H1 (cell line): ENCODE measurements at regions of chr13 and their contacts with region 1.

Region 1: DNA sequence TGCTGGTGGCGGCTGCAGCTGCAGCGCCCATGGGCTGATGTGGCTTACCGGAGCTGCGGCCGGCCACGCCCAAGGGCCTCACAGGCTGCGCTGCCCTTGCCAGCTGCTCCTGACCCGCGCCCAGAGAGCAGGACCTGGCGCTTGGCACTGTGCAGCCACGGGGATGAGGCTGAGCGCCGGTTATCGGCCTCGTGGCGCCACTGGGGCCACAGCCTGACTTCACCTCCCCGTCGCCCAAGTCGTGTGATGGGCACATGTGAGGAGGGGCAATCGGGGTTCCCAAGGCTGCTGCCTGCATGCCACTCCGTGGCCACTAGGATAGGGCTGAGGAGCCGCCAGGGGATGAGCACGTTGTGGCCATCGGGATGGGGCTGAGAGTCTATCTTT is 77.2 kb upstream of the PABPC3 start:
- DNase-seq: no peak
- H3K4me3 ChIP-seq: peak overlapping the region; percentile 38 to 66 (median 46)
- H3K27ac ChIP-seq: no peak overlapping the region
- H3K4me1 ChIP-seq: no peaks in the 10 kb centered on the region; a peak in 1 of 7 replicates
- H3K27me3 ChIP-seq: peaks cover 7 to 27% (median 20%) of the 10 kb centered on the region in 4 experiments
- CTCF ChIP-seq: peak; percentile 34 to 37 (median 35); a peak in 3 of 4 replicates
- EP300 ChIP-seq: no peak
- POLR2A ChIP-seq: no peak
- RAD21 ChIP-seq: no peak

Region 2: DNA sequence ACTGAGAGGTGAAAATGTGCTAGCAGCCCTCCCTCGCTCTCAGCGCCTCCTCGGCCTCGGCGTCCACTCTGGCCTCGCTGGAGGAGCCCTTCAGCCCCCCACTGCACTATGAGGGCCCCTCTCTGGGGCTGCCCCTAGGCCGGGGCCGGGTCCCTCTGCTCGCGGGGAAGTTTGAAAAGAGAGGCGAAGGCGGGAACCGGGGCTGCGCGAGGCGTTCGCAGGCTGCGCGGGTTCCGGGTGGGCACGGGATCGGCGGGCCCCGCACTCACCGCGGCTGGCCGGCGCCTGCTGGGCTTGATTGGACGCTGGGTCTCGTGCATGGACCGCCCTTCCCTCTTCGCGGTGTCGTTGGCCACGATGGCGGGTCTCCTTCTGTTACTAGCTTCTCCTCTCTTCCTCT is 680.0 kb before region 1 on chr13:
- CTCF ChIA-PET with region 1: no interaction called
- POLR2A ChIA-PET with region 1: no interaction called
- DNase-seq: no peak
- H3K4me3 ChIP-seq: no peak overlapping the region
- H3K27ac ChIP-seq: no peak overlapping the region
- H3K4me1 ChIP-seq: no peaks in the 10 kb centered on the region
- H3K27me3 ChIP-seq: no peaks in the 10 kb centered on the region
- CTCF ChIP-seq: no peak
- EP300 ChIP-seq: no peak
- POLR2A ChIP-seq: no peak
- RAD21 ChIP-seq: no peak

Region 3: DNA sequence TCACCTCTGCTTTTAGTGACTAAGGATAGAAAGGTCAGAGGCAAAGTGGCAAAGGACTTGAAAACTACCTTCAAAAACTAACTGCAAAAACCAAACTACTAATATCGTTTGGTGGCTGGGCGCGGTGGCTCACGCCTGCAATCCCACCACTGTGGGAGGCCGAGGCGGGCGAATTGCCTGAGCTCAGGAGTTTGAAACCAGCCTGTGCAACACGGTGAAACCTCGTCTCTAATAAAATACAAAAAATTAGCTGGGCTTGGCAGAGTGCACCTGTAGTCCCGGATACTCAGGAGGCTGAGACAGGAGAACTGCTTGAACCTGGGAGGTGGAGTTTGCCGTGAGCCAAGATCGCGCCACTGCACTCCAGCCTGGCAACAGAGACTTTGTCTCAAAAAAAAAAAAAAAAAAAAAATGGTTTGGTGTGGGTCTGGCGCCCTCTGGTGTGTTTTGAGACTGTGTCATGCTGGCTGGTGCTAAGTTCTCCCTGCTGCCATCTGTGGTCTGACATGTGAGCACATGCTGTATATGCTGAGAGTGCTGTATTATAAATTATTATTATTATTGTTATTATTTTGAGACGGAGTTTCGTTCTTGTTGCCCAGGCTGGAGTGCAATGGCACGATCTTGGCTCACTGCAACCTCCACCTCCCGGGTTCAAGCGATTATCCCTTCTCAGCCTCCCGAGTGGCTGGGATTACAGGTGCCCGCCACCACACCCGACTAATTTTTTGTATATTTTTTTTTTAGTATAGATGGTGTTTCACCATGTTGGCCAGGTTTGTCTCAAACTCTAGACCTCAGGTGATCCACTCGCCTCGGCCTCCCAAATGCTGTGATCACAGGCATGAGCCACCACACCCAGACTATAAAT is 290.8 kb before region 1 on chr13:
- CTCF ChIA-PET with region 1: no interaction called
- POLR2A ChIA-PET with region 1: no interaction called
- DNase-seq: peak in 1 of 2 experiments; percentile 63
- H3K4me3 ChIP-seq: no peak overlapping the region
- H3K27ac ChIP-seq: no peak overlapping the region
- H3K4me1 ChIP-seq: no peaks in the 10 kb centered on the region
- H3K27me3 ChIP-seq: no peaks in the 10 kb centered on the region
- CTCF ChIP-seq: peak; percentile 78 to 99 (median 78)
- EP300 ChIP-seq: no peak
- POLR2A ChIP-seq: no peak
- RAD21 ChIP-seq: peak; percentile 90 to 91

Region 4: GRCh38 chr13:24922745-24923591 is 95.8 kb before region 1 on chr13:
- CTCF ChIA-PET with region 1: no interaction called
- POLR2A ChIA-PET with region 1: no interaction called
- DNase-seq: peak; percentile 92 to 93
- H3K4me3 ChIP-seq: peak overlapping the region; percentile 70 to 93 (median 85)
- H3K27ac ChIP-seq: peak overlapping the region; percentile 81
- H3K4me1 ChIP-seq: peaks cover 0 to 2% (median 2%) of the 10 kb centered on the region in 4 experiments; a peak in 2 of 7 replicates
- H3K27me3 ChIP-seq: no peaks in the 10 kb centered on the region
- CTCF ChIP-seq: peak in 1 of 3 experiments; percentile 5; a peak in 1 of 4 replicates
- EP300 ChIP-seq: 0 out of 3 replicates have a peak, but pooled peaks of 1 of the 2 experiments have one; percentile 56
- POLR2A ChIP-seq: peak; percentile 49 to 76
- RAD21 ChIP-seq: peak in 1 of 2 experiments; percentile 7; a peak in 2 of 4 replicates

Region 5: DNA sequence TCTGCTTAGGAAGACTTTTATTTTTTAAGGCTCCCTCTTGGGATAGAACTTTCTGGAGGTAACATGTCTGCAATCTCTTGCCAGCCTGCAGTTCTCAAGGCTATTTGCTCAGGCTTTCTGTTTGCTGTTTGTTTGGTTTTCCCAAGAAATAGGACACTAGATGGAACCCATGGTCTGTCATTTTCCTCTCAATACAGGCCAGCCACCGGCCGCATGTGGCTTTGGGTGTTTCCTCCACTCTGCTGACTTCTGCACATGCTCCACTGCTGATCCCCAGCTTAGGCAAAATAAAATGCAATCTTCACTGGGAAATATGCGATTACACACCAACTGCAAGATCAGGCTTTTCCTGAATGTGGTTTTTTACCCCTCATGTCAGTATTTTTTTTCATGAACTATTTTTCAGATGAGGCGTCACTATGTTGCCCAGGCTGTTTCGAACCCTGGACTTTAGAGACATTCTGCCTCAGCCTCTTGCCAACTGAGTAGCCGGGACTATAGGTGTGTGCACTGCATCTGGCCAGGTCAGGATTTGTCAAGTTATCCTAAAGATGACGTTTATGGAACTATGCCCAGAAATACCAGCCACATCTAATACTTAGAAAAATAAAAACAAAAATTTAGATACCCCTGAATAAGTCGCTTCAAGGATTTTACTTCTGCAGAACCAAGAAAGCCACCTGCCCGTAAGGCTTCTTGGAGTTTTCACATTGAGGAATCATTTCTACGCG is 17.1 kb before region 1 on chr13:
- CTCF ChIA-PET with region 1: interaction called, 25 read pairs
- POLR2A ChIA-PET with region 1: no interaction called
- DNase-seq: no peak
- H3K4me3 ChIP-seq: no peak overlapping the region
- H3K27ac ChIP-seq: no peak overlapping the region
- H3K4me1 ChIP-seq: no peaks in the 10 kb centered on the region; a peak in 1 of 7 replicates
- H3K27me3 ChIP-seq: no peaks in the 10 kb centered on the region
- CTCF ChIP-seq: no peak
- EP300 ChIP-seq: no peak
- POLR2A ChIP-seq: no peak
- RAD21 ChIP-seq: peak in 1 of 2 experiments; percentile 33; a peak in 1 of 4 replicates

Region 6: DNA sequence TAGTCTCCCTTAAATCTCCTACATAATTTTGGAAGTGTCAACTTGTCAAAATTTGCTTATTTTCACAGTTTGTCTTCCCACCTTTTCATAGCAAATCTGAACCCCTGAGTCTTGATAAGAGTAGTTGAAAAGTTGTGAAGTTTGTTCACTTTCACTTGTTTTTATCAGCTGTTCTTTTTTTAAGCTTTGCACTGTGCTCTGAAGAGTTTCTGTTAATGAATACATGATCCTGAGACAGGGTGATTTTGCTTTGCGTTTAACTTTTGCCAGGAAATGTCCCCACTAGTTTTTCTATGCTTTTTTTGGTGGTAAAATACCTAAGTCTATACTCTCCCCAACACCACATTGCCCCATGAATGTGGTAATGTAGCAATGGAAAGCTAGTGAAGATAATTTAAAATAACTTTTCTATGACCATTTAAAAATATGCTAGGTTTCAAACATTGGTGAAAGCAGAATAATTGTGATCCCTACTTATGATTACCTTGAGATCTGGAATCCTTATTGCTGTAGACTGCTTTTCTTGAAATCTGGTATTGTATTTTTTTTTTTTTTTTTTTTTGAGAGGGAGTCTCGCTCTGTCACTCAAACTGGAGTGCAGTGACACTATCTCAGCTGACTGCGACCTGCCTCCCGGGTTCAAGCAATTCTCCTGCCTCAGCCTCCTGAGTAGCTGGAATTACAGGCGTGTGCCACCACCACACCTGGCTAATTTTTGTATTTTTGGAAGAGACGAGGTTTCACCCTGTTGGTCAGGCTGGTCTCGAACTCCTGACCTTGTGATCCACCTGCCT is 288.1 kb after region 1 on chr13:
- CTCF ChIA-PET with region 1: no interaction called
- POLR2A ChIA-PET with region 1: no interaction called
- DNase-seq: no peak
- H3K4me3 ChIP-seq: no peak overlapping the region
- H3K27ac ChIP-seq: no peak overlapping the region
- H3K4me1 ChIP-seq: 0 out of 7 replicates have a peak, but pooled peaks cover 0 to 5% (median 0%) of the 10 kb centered on the region in 4 experiments
- H3K27me3 ChIP-seq: no peaks in the 10 kb centered on the region
- CTCF ChIP-seq: no peak
- EP300 ChIP-seq: no peak
- POLR2A ChIP-seq: no peak
- RAD21 ChIP-seq: no peak